Keratinocyte (primary cell): ENCODE measurements at regions of chr4 and their contacts with region 1.

Region 1: DNA sequence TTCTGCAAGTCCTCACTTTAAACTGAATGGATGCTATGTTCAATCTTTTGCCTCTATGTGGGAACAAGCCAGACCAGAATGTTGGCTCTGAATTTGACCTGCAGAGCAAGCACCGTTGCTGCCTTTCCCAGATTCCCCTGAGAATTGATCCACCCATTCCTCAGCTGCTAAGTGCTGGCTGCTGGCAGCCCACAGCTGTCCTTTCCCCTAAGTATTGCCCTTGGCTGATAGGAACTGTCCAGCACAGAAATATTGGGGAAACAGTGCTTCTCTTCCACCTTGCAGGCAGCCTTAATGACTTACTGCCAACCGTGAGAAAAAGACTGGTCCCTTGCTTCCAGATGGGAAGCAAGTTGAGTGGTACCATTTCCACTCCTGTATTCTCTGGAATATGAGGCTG is 475.9 kb downstream of the PDHA2 start:
- DNase-seq: no peak
- H3K4me3 ChIP-seq: no peak overlapping the region
- H3K27ac ChIP-seq: no peak overlapping the region
- H3K4me1 ChIP-seq: no peaks in the 10 kb centered on the region
- H3K27me3 ChIP-seq: no peaks in the 10 kb centered on the region
- CTCF ChIP-seq: no peak

Region 2: DNA sequence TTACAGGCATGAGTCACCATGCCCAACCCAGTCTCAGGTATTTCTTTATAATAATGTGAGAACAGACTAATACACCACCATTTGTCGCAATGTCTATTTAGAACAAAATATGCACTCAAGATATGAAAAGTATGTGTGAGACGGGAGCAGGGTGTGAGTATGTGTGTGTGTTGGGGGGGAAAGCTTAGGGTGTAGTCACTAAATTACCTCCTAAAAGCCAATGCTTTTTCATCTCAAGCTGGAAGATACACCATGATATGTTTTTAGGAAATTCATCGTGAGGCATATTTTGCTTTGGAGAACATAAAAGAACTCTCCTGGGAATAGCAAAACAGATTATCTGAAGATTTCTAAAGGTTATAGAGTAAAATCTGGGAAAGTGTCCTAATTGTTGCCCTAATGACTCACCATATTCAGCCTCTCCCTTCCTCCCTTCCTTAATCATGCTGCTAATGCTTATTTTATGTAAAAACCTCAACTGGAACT is 213.2 kb before region 1 on chr4:
- dilution Hi-C with region 1: no loop called
- DNase-seq: no peak
- H3K4me3 ChIP-seq: no peak overlapping the region
- H3K27ac ChIP-seq: peak overlapping the region; percentile 49
- H3K4me1 ChIP-seq: no peaks in the 10 kb centered on the region
- H3K27me3 ChIP-seq: no peaks in the 10 kb centered on the region
- CTCF ChIP-seq: no peak

Region 3: GRCh38 chr4:96465834-96466233 is 150.0 kb after region 1 on chr4:
- dilution Hi-C with region 1: no loop called
- DNase-seq: no peak
- H3K4me3 ChIP-seq: no peak overlapping the region
- H3K27ac ChIP-seq: no peak overlapping the region
- H3K4me1 ChIP-seq: no peaks in the 10 kb centered on the region
- H3K27me3 ChIP-seq: no peaks in the 10 kb centered on the region
- CTCF ChIP-seq: no peak

Region 4: DNA sequence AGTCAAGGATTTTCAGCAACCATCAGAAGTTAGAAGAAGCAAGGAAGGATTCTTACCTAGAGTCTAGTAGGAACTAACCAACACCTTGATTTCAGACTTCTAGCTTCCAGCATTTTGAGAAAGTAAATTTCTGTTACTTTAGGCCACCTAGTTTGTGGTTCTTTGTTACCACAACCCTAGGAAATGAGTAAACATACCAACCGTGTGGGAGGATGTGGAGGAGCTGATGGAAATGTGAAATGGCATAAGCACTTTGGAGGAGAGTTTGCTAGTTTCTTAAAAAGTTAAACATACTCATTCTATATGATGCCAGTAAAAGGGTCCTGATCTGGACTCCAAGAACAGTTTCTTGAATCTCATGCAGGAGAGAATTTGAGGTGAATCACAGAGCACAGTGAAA is 203.5 kb after region 1 on chr4:
- dilution Hi-C with region 1: no loop called
- DNase-seq: no peak
- H3K4me3 ChIP-seq: no peak overlapping the region
- H3K27ac ChIP-seq: no peak overlapping the region
- H3K4me1 ChIP-seq: no peaks in the 10 kb centered on the region
- H3K27me3 ChIP-seq: no peaks in the 10 kb centered on the region
- CTCF ChIP-seq: no peak

Region 5: GRCh38 chr4:96827086-96827485 is 511.3 kb after region 1 on chr4:
- dilution Hi-C with region 1: loop called (anchors 25 kb)
- DNase-seq: no peak
- H3K4me3 ChIP-seq: no peak overlapping the region
- H3K27ac ChIP-seq: no peak overlapping the region
- H3K4me1 ChIP-seq: no peaks in the 10 kb centered on the region
- H3K27me3 ChIP-seq: no peaks in the 10 kb centered on the region
- CTCF ChIP-seq: no peak